Panc1 (cell line): ENCODE measurements at regions of chr19 and their contacts with region 1.

Region 1: GRCh38 chr19:38964738-38965137 is 10.8 kb downstream of the FBXO17 start:
- DNase-seq: no peak
- ATAC-seq: no peak
- H3K4me3 ChIP-seq: no peak overlapping the region
- H3K27ac ChIP-seq: no peak overlapping the region
- H3K4me1 ChIP-seq: peaks cover 7% of the 10 kb centered on the region
- H3K27me3 ChIP-seq: no peaks in the 10 kb centered on the region
- CTCF ChIP-seq: no peak

Region 2: DNA sequence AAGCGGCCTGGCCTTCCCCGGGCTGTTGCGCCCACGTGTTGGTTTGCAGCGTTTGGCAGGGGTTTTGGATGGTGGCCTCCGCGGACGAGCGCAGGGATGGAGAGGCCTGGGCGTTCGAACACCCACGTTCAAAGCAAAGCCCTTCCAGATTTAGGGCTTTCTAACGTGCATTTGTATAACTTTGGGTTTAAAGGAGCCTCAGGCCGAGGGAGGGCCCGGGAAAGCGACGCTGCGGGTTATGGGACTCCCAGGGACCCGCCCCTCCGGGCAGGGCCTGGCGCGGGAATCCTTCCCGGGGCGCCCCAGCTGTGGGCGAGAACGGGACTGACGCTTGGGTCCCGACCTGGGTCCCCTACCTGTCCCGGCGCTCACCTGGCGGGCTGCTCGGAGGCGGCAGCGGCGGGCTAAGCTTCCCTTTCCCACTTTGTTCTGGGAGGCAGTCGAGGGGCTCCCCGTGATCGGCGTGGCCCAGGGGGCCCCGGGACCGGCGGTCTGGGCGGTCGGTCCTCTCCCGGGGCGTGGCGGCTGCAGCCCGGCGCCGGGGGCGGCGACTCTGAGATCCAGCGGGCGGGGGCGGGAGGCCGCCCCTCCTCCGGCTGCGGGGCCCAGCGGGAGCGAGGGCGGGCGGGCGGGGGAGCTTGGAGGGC is 10.6 kb after region 1 on chr19 and contains the start of gene FBXO17:
- CTCF ChIA-PET with region 1: interaction called, 27 read pairs
- POLR2A ChIA-PET with region 1: interaction called, 3 read pairs
- in situ Hi-C with region 1: no loop called
- intact Hi-C with region 1: no loop called
- DNase-seq: peak; percentile 81
- ATAC-seq: peak; percentile 89
- H3K4me3 ChIP-seq: peak within 1 kb of the TSS; percentile 50 to 59
- H3K27ac ChIP-seq: peak within 1 kb of the TSS; percentile 97
- H3K4me1 ChIP-seq: peaks cover 48% of the 10 kb centered on the region
- H3K27me3 ChIP-seq: no peaks in the 10 kb centered on the region
- CTCF ChIP-seq: no peak
- total RNA-seq, gene FBXO17: 411 TPM

Region 3: DNA sequence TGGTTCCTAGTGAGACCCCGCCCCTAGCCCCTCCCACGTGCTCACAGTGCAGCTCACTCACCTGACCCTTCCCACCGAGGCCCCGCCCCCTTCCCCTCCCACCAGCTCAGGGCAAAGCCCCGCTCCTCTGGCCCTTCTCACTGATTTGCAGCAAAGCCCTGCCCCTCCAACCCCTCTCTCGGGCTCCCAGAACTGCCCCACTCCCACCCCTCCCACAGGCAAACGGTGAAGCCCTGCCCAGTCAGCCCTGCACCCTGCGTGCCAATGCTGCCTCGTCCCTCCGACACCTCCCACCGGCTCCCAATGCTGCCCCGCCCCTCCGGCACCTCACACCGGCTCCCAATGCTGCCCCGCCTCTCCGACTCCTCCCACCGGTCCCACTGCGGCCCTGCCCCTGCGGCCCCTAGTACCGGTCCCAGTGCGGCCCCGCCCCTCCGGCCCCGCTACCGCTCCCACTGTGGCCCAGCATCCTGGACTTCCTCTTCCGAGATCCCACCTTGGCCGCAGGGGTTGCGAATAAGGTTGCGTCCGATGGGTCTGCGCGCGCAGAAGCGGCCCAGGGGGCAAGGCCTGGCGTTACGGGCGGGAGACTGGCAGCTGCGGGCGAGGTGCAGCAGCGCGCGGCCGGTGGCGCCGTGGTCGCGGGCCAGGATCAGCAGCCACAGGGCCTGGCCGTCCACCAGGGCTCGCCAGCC is 66.8 kb after region 1 on chr19:
- CTCF ChIA-PET with region 1: interaction called, 12 read pairs
- POLR2A ChIA-PET with region 1: interaction called, 4 read pairs
- in situ Hi-C with region 1: no loop called
- intact Hi-C with region 1: loop called (anchors 2 kb)
- DNase-seq: peak; percentile 100
- ATAC-seq: peak; percentile 93
- H3K4me3 ChIP-seq: peak overlapping the region; percentile 46 to 72
- H3K27ac ChIP-seq: peak overlapping the region; percentile 91
- H3K4me1 ChIP-seq: peaks cover 24% of the 10 kb centered on the region
- H3K27me3 ChIP-seq: no peaks in the 10 kb centered on the region
- CTCF ChIP-seq: no peak

Region 4: DNA sequence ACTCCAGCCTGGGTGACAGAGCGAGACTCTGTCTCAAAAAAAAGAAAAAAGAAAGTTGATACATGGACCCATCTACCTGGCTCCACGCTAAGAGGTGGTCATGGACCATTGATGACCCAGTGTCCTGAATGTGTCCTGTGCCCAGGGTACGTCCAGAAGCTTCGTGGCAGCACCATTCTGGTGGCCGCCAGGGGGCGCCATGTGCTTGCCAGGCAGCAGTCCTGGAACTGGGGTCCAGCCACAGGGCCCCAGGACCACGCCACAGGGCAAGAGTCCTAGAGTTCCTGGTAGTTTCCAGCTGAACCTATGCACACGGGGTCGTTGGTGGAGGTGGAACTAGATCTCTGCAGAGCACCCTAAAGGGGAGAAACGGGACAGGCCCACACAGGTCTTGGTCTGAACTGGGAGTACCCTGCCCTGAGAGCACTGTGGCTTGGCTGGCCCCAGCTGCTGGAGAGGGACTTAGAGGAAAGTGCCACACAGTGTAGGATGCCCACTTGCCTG is 87.6 kb after region 1 on chr19:
- CTCF ChIA-PET with region 1: interaction called, 12 read pairs
- POLR2A ChIA-PET with region 1: no interaction called
- in situ Hi-C with region 1: no loop called
- intact Hi-C with region 1: no loop called
- DNase-seq: peak; percentile 90
- ATAC-seq: peak; percentile 91
- H3K4me3 ChIP-seq: no peak overlapping the region
- H3K27ac ChIP-seq: peak overlapping the region; percentile 4; the same call in 1 of the 2 replicates
- H3K4me1 ChIP-seq: no peaks in the 10 kb centered on the region
- H3K27me3 ChIP-seq: no peaks in the 10 kb centered on the region
- CTCF ChIP-seq: no peak

Region 5: DNA sequence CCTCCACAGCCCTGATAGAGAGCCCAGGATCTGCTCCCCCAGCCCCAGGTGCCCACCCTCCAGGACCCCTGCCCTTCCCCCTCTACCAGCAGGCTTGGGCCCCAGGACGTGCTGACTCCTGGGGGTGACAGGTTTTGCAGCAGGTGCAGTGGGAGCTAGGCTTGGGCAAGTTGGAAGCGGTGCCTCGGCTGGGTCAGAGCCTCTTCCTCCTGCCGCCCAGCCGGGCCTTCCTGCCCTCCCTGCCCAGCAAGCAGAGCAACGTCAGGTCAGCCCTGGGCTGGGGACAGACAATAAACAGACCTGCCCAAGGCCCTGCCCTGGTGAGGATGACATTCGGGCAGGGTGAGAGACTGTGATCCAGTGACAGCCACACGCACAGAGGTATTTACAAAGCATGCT is 222.8 kb after region 1 on chr19:
- CTCF ChIA-PET with region 1: no interaction called
- POLR2A ChIA-PET with region 1: no interaction called
- in situ Hi-C with region 1: no loop called
- intact Hi-C with region 1: loop called (anchors 10 kb)
- DNase-seq: no peak
- ATAC-seq: peak; percentile 40
- H3K4me3 ChIP-seq: no peak overlapping the region
- H3K27ac ChIP-seq: no peak overlapping the region
- H3K4me1 ChIP-seq: no peaks in the 10 kb centered on the region; the same call in 1 of the 2 replicates
- H3K27me3 ChIP-seq: no peaks in the 10 kb centered on the region
- CTCF ChIP-seq: no peak